CD14-positive monocyte (primary cell): ENCODE measurements at regions of chr7 and their contacts with region 1.

Region 1: GRCh38 chr7:131507592-131508331 is 48.7 kb downstream of the PODXL start:
- DNase-seq: peak; percentile 33 to 55 (median 53)
- H3K4me3 ChIP-seq: no peak overlapping the region
- H3K4me3 Mint-ChIP-seq: peak overlapping the region in 1 of 2 donors; percentile 53
- H3K27ac ChIP-seq: no peak overlapping the region
- H3K27ac Mint-ChIP-seq: no peak overlapping the region
- H3K4me1 ChIP-seq: peaks cover 0 to 3% of the 10 kb centered on the region in 2 donors
- H3K4me1 Mint-ChIP-seq: peaks cover 7% of the 10 kb centered on the region
- H3K27me3 ChIP-seq: peaks cover 0 to 3% of the 10 kb centered on the region in 2 donors
- H3K27me3 Mint-ChIP-seq: peaks cover 5 to 17% (median 9%) of the 10 kb centered on the region in 3 donors
- CTCF ChIP-seq: peak; percentile 83

Region 2: DNA sequence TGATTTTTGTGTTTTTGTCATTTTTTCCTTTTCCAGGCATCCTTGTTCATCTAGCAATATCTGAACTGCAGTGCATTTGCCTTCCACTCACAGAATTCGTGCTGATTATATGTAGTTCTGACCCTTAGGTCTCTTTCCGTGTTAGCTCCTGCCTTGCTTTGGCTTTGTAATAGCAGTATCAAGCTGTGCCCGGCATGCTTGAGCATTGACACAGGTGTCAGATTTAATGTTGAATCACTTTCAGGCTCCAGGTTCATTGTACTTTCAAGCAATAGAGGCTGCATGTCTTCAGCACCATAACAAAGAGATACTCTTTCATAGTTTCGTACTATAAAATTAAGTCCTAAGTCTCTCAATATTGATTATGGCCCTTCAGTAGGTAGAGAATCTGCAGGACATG is 36.2 kb before region 1 on chr7:
- intact Hi-C with region 1: no loop called
- DNase-seq: no peak
- H3K4me3 ChIP-seq: no peak overlapping the region
- H3K4me3 Mint-ChIP-seq: no peak overlapping the region
- H3K27ac ChIP-seq: no peak overlapping the region
- H3K27ac Mint-ChIP-seq: no peak overlapping the region
- H3K4me1 ChIP-seq: no peaks in the 10 kb centered on the region
- H3K4me1 Mint-ChIP-seq: no peaks in the 10 kb centered on the region
- H3K27me3 ChIP-seq: no peaks in the 10 kb centered on the region
- H3K27me3 Mint-ChIP-seq: peaks cover 0 to 2% (median 0%) of the 10 kb centered on the region in 3 donors
- CTCF ChIP-seq: no peak

Region 3: DNA sequence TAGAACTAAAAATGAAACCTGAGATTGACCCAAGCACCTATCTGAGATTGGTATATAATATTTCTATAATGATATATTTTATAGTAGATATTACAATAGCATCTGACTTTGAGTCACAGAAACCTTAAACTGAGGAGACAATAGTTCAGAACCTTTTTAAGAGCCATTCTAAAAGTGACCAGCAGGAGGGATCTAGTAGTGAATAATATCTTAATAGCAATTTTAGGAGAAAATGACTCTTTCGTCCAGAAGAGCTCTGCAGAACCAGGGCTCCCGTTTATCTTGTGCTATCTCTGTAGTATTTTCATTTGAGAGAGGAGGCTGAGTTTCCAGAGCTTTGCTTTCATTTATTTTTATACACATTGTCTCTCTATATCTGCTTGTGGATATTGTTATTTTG is 19.4 kb before region 1 on chr7:
- intact Hi-C with region 1: no loop called
- DNase-seq: no peak
- H3K4me3 ChIP-seq: no peak overlapping the region
- H3K4me3 Mint-ChIP-seq: no peak overlapping the region
- H3K27ac ChIP-seq: no peak overlapping the region
- H3K27ac Mint-ChIP-seq: no peak overlapping the region
- H3K4me1 ChIP-seq: no peaks in the 10 kb centered on the region
- H3K4me1 Mint-ChIP-seq: no peaks in the 10 kb centered on the region
- H3K27me3 ChIP-seq: no peaks in the 10 kb centered on the region
- H3K27me3 Mint-ChIP-seq: no peaks in the 10 kb centered on the region
- CTCF ChIP-seq: no peak

Region 4: DNA sequence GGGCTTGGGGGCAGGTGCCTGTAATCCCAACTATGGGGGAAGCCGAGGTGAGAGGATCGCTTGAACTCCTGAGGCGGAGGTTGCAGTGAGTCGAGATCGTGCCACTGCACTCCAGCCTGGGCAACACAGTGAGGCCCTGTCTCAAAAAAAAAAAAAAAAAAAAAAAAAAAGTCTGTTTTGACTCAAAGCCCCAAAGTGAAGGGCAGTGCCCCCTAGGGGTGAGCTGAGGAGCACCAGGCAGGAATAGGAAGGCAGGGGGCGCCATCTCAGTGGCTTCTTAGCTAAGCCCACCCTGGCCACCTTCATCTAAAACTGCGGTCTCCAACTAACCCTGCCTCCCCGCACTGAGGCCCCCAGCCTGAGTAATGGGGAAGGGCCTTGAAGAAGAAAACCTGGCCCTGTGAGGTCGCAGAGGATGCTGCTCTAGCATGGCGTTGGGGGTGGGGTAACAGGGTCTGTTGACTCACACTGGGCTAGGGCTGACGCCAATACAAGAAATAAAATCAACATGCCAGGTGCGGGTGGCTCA is 38.9 kb after region 1 on chr7:
- intact Hi-C with region 1: no loop called
- DNase-seq: no peak
- H3K4me3 ChIP-seq: no peak overlapping the region
- H3K4me3 Mint-ChIP-seq: no peak overlapping the region
- H3K27ac ChIP-seq: no peak overlapping the region
- H3K27ac Mint-ChIP-seq: no peak overlapping the region
- H3K4me1 ChIP-seq: no peaks in the 10 kb centered on the region
- H3K4me1 Mint-ChIP-seq: peaks cover 8% of the 10 kb centered on the region
- H3K27me3 ChIP-seq: no peaks in the 10 kb centered on the region
- H3K27me3 Mint-ChIP-seq: peaks cover 4 to 10% (median 6%) of the 10 kb centered on the region in 3 donors
- CTCF ChIP-seq: peak; percentile 76

Region 5: GRCh38 chr7:131586253-131586652 is 78.5 kb after region 1 on chr7:
- intact Hi-C with region 1: no loop called
- DNase-seq: no peak
- H3K4me3 ChIP-seq: no peak overlapping the region
- H3K4me3 Mint-ChIP-seq: no peak overlapping the region
- H3K27ac ChIP-seq: no peak overlapping the region
- H3K27ac Mint-ChIP-seq: no peak overlapping the region
- H3K4me1 ChIP-seq: no peaks in the 10 kb centered on the region
- H3K4me1 Mint-ChIP-seq: no peaks in the 10 kb centered on the region
- H3K27me3 ChIP-seq: no peaks in the 10 kb centered on the region
- H3K27me3 Mint-ChIP-seq: peaks cover 0 to 6% (median 1%) of the 10 kb centered on the region in 3 donors
- CTCF ChIP-seq: no peak

Region 6: GRCh38 chr7:131654668-131655326 is 147.0 kb after region 1 on chr7:
- intact Hi-C with region 1: loop called (anchors 1 to 10 kb)
- DNase-seq: peak; percentile 40 to 53 (median 48)
- H3K4me3 ChIP-seq: no peak overlapping the region
- H3K4me3 Mint-ChIP-seq: no peak overlapping the region
- H3K27ac ChIP-seq: no peak overlapping the region
- H3K27ac Mint-ChIP-seq: no peak overlapping the region
- H3K4me1 ChIP-seq: no peaks in the 10 kb centered on the region
- H3K4me1 Mint-ChIP-seq: no peaks in the 10 kb centered on the region
- H3K27me3 ChIP-seq: no peaks in the 10 kb centered on the region
- H3K27me3 Mint-ChIP-seq: peaks cover 0 to 7% (median 3%) of the 10 kb centered on the region in 3 donors
- CTCF ChIP-seq: peak; percentile 81